Mammary epithelial cell (primary cell): ENCODE measurements at regions of chrX and their contacts with region 1.

Region 1: GRCh38 chrX:15849555-15849954 is 5.1 kb downstream of the AP1S2 start:
- DNase-seq: peak; percentile 8
- H3K4me3 ChIP-seq: no peak overlapping the region
- H3K27ac ChIP-seq: no peak overlapping the region
- H3K4me1 ChIP-seq: peaks cover 7% of the 10 kb centered on the region
- H3K27me3 ChIP-seq: no peaks in the 10 kb centered on the region
- CTCF ChIP-seq: peak in 1 of 2 donors; percentile 44

Region 2: GRCh38 chrX:16670998-16671397 is 821.4 kb after region 1 on chrX:
- CTCF ChIA-PET with region 1: no interaction called
- dilution Hi-C with region 1: no loop called
- in situ Hi-C with region 1: no loop called
- intact Hi-C with region 1: loop called (anchors 2 kb)
- DNase-seq: peak; percentile 25
- H3K4me3 ChIP-seq: no peak overlapping the region
- H3K27ac ChIP-seq: no peak overlapping the region
- H3K4me1 ChIP-seq: no peaks in the 10 kb centered on the region
- H3K27me3 ChIP-seq: no peaks in the 10 kb centered on the region
- CTCF ChIP-seq: peak; percentile 41 to 53